ENCODE measurements at regions of chr12 and their contacts with region 1.

Region 1: DNA sequence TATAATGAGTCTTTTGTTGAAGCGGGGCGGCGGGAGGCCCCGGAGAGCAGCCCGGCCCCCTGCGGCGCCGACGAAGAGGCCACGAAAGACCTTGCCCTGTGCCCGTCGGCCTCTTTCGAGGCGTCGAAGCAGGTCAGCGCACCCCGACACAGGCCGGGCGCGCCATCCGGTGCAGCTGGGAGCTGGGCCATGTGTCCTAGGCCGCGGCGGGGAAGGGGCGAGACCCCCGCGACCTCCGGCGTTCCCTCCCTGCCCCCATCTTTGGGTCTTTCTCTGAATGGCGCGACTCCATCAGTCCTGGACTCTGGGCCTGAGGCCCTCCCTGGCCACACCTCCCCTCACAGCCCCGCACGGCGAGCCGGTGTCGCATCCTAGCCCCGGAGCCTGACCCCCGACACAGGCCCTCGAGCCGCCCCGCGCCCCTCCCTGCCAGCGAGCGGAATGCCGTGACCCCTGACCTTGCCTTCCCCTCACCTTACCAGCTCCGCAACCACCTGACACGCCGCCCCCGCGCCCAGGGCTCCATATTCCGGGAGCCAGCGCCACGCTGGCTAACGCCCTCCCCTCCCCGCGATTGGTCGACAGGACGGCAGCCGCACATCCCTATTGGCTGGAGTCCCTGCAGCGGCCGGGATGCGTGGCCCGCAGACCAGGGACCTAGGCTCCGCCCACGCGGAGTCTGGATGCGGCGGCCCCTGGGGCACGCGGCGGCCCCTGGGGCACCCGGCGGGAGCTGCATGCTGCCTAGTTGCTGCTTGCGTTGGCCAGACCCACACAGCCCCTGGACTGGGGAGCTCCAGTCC is at the start of gene SLC11A2:
- DNase-seq: peak; percentile 95 to 98 (median 97)
- H3K4me3 ChIP-seq: peak within 1 kb of the TSS; percentile 61 to 97 (median 91)
- H3K27ac ChIP-seq: peak within 1 kb of the TSS; percentile 84 to 100 (median 99)
- H3K27me3 ChIP-seq: no peaks in the 10 kb centered on the region
- CTCF ChIP-seq: peak in 44 of 56 donors; percentile 14 to 64 (median 43)
- total RNA-seq, gene SLC11A2: 65.0 to 180 (median 103) TPM

Region 2: GRCh38 chr12:50825372-50825838 is 200.6 kb before region 1 on chr12:
- intact Hi-C with region 1: loop called in 1 of 2 experiments (anchors 2 kb)
- DNase-seq: no peak
- H3K4me3 ChIP-seq: peak overlapping the region in 3 of 59 donors; percentile 6 to 20 (median 10)
- H3K27ac ChIP-seq: peak overlapping the region in 29 of 59 donors; percentile 1 to 65 (median 32)
- H3K27me3 ChIP-seq: no peaks in the 10 kb centered on the region
- CTCF ChIP-seq: peak; percentile 52 to 84 (median 70)

Region 3: GRCh38 chr12:50924439-50925341 is 101.3 kb before region 1 on chr12:
- intact Hi-C with region 1: loop called (anchors 2 to 10 kb)
- DNase-seq: peak; percentile 65 to 93 (median 84)
- H3K4me3 ChIP-seq: peak overlapping the region; percentile 44 to 89 (median 74)
- H3K27ac ChIP-seq: peak overlapping the region; percentile 64 to 99 (median 95)
- H3K27me3 ChIP-seq: no peaks in the 10 kb centered on the region
- CTCF ChIP-seq: peak in 10 of 56 donors; percentile 2 to 21 (median 6)

Region 4: DNA sequence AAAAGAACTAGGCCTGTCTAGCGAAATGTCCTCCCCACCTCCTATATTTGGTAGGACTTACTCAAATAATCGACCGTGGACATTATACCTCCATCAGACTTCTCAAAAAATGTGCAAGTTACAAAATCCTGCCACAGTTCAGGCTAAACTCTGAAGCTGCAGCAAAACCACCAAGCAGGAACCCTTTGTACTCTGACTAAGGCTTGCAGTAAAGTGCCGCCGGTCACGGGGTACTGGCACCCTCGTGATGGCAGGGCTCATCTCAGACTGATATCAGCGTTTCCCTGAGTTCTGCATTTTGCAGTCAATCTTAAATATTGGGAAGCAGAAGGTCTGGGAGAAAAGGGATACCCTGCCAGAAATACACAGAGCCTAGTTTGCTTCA is 17.0 kb before region 1 on chr12:
- intact Hi-C with region 1: loop called (anchors 2 kb)
- DNase-seq: peak; percentile 53 to 97 (median 94)
- H3K4me3 ChIP-seq: peak overlapping the region in 57 of 59 donors; percentile 0 to 64 (median 44)
- H3K27ac ChIP-seq: peak overlapping the region; percentile 82 to 100 (median 95)
- H3K27me3 ChIP-seq: no peaks in the 10 kb centered on the region
- CTCF ChIP-seq: peak in 14 of 56 donors; percentile 11 to 45 (median 22)

Region 5: GRCh38 chr12:51047655-51048540 is 21.9 kb after region 1 on chr12 and contains the start of gene LETMD1:
- intact Hi-C with region 1: loop called (anchors 1 to 2 kb)
- DNase-seq: peak; percentile 85 to 98 (median 96)
- H3K4me3 ChIP-seq: peak within 1 kb of the TSS; percentile 55 to 100 (median 83)
- H3K27ac ChIP-seq: peak within 1 kb of the TSS; percentile 57 to 100 (median 96)
- H3K27me3 ChIP-seq: no peaks in the 10 kb centered on the region
- CTCF ChIP-seq: peak; percentile 49 to 97 (median 90)
- total RNA-seq, gene LETMD1: 43.1 to 97.4 (median 70.1) TPM

Region 6: GRCh38 chr12:51083126-51083833 is 57.2 kb after region 1 on chr12 and contains the start of gene CSRNP2:
- intact Hi-C with region 1: loop called in 1 of 2 experiments (anchors 2 kb)
- DNase-seq: peak; percentile 96 to 99 (median 98)
- H3K4me3 ChIP-seq: peak within 1 kb of the TSS; percentile 64 to 96 (median 88)
- H3K27ac ChIP-seq: peak within 1 kb of the TSS; percentile 34 to 98 (median 91)
- H3K27me3 ChIP-seq: no peaks in the 10 kb centered on the region
- CTCF ChIP-seq: peak in 43 of 56 donors; percentile 6 to 60 (median 34)
- total RNA-seq, gene CSRNP2: 42.6 to 96.4 (median 71.8) TPM

Region 7: DNA sequence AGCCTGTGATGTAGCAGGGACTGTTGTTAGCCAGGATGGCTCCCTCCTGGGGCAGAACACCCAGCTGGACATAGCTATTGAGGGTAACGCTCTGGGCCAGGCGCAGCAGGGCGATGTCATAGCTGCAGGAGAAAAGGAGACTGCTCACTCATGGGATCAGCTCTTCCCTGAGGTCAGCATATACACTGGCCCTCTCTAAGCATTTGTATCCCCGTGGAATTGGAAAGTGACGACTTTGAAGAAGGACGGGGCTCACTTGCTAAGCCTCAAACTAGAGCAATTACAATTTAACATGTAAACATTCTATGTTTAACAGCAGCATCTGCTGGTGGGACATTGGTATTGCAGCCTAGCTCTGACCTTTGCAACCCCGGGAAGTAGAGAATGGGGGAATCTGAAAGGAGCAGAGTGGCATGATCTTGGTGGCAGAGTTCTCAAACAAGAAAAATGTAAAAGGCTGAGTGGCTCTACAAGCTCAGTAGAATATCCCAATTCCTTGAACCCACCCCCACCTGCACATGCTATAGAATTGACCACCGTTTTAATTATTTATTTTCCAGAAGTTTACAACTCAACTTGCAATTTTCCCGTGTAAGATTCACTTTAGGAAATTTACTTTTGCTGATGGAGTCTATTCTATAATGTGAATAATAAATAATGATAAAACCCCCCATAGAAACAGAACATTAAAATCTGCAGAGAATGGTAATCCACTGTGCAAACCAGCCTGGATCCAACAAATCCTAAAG is 315.4 kb after region 1 on chr12:
- intact Hi-C with region 1: loop called in 1 of 2 experiments (anchors 5 kb)
- DNase-seq: peak in 6 of 10 donors; percentile 50 to 80 (median 58)
- H3K4me3 ChIP-seq: peak overlapping the region in 55 of 59 donors; percentile 3 to 56 (median 39)
- H3K27ac ChIP-seq: peak overlapping the region in 25 of 59 donors; percentile 16 to 86 (median 60)
- H3K27me3 ChIP-seq: no peaks in the 10 kb centered on the region
- CTCF ChIP-seq: peak; percentile 91 to 99 (median 97)